ENCODE measurements at regions of chr14 and their contacts with region 1.

Region 1: GRCh38 chr14:68554208-68554607 is 238.7 kb downstream of the ZFP36L1 start:
- DNase-seq: no peak
- ATAC-seq: no peak
- H3K4me3 ChIP-seq: no peak overlapping the region
- H3K27ac ChIP-seq: no peak overlapping the region
- H3K4me1 ChIP-seq: no peaks in the 10 kb centered on the region
- H3K27me3 ChIP-seq: no peaks in the 10 kb centered on the region
- CTCF ChIP-seq: no peak
- EP300 ChIP-seq: no peak
- POLR2A ChIP-seq: no peak
- RAD21 ChIP-seq: no peak

Region 2: DNA sequence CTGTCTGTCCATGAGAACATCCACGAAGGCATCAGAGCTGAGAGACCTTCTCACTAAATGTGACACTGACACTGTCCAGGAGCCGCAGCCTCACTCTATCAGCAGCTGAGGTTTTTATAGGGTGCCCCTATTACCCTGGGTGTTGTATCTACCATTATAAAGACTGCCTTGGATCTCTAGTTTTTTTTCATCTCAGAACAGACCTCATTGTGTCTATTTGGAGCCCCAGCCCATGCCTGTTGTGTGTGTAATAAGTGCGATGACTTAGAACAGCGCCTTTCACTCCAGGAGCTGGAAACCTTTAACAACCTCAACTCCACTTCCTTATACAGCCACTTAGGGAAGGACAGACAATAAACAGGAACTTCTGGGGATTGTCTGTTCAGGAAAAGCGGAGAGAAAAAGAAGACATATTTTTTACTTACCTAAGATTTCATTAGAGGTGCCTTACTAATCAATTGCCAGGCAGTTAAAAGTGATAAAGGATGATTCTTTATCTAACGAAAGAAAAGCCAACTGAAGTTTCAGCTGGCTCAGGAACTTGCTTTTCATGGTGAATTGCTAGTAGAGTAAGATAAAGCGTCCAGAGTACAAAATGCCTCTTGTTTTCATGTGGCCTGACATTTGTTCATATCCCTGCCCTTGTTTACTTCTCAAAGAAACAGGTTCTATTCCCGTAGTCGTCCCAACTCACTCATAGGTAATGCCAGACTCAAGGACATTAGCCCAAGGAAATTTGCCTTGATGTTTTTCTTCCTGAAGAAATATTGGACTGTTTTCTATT is 314.0 kb before region 1 on chr14:
- CTCF ChIA-PET with region 1: no interaction called
- POLR2A ChIA-PET with region 1: interaction called, 10 read pairs
- RAD21 ChIA-PET with region 1: no interaction called
- SMC1A ChIA-PET with region 1: no interaction called
- in situ Hi-C with region 1: no loop called
- intact Hi-C with region 1: no loop called
- DNase-seq: no peak
- ATAC-seq: no peak
- H3K4me3 ChIP-seq: no peak overlapping the region
- H3K27ac ChIP-seq: no peak overlapping the region
- H3K4me1 ChIP-seq: 0 out of 2 replicates have a peak, but pooled peaks cover 3% of the 10 kb centered on the region
- H3K27me3 ChIP-seq: no peaks in the 10 kb centered on the region
- CTCF ChIP-seq: no peak
- EP300 ChIP-seq: no peak
- POLR2A ChIP-seq: no peak
- RAD21 ChIP-seq: no peak

Measured in GM12878 (cell line).